HEK293 (cell line): ENCODE measurements at regions of chr17 and their contacts with region 1.

Region 1: GRCh38 chr17:34199932-34200534 is 55.1 kb upstream of the CCL2 start:
- H3K4me3 ChIP-seq: no peak overlapping the region
- H3K27ac ChIP-seq: no peak overlapping the region
- H3K4me1 ChIP-seq: no peaks in the 10 kb centered on the region
- CTCF ChIP-seq: peak; percentile 99

Region 2: GRCh38 chr17:33927732-33928133 is 272.3 kb before region 1 on chr17:
- CTCF ChIA-PET with region 1: interaction called, 10 read pairs
- POLR2A ChIA-PET with region 1: no interaction called
- H3K4me3 ChIP-seq: no peak overlapping the region
- H3K27ac ChIP-seq: no peak overlapping the region
- H3K4me1 ChIP-seq: 0 out of 2 replicates have a peak, but pooled peaks cover 2% of the 10 kb centered on the region
- CTCF ChIP-seq: no peak

Region 3: GRCh38 chr17:34248511-34249024 is 48.5 kb after region 1 on chr17:
- CTCF ChIA-PET with region 1: interaction called, 14 read pairs
- POLR2A ChIA-PET with region 1: no interaction called
- H3K4me3 ChIP-seq: no peak overlapping the region
- H3K27ac ChIP-seq: no peak overlapping the region
- H3K4me1 ChIP-seq: no peaks in the 10 kb centered on the region
- CTCF ChIP-seq: no peak

Region 4: GRCh38 chr17:34285286-34285792 is 85.3 kb after region 1 on chr17 and contains the start of gene CCL11:
- CTCF ChIA-PET with region 1: interaction called, 10 read pairs
- POLR2A ChIA-PET with region 1: no interaction called
- H3K4me3 ChIP-seq: no peak within 1 kb of the TSS
- H3K27ac ChIP-seq: no peak within 1 kb of the TSS
- H3K4me1 ChIP-seq: no peaks in the 10 kb centered on the region; the same call in 1 of the 2 replicates
- CTCF ChIP-seq: no peak

Region 5: DNA sequence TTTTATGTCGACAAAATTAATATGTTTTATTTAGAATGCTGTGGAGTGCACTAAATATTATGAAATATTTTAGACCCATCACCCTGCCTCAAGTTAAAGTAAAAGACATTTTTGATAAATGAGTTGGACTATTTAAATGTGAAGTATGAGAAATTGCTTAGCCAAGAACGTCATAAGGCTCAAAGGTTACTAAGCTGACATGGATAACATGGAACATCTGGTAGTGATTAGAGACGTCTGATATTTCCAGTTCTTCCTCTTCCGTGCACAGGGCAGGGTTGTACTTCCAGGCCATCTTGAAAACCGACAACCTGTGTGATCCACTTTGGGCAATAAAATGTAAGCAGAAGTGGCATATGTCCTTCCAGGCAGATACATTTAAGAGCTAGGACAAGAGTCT is 112.0 kb after region 1 on chr17:
- CTCF ChIA-PET with region 1: interaction called, 105 read pairs
- POLR2A ChIA-PET with region 1: no interaction called
- H3K4me3 ChIP-seq: no peak overlapping the region
- H3K27ac ChIP-seq: no peak overlapping the region
- H3K4me1 ChIP-seq: no peaks in the 10 kb centered on the region
- CTCF ChIP-seq: no peak

Region 6: GRCh38 chr17:34370997-34371395 is 171.0 kb after region 1 on chr17:
- CTCF ChIA-PET with region 1: interaction called, 578 read pairs
- POLR2A ChIA-PET with region 1: no interaction called
- H3K4me3 ChIP-seq: no peak overlapping the region
- H3K27ac ChIP-seq: no peak overlapping the region
- H3K4me1 ChIP-seq: 0 out of 2 replicates have a peak, but pooled peaks cover 9% of the 10 kb centered on the region
- CTCF ChIP-seq: no peak